Transverse colon (tissue), 4 donors: ENCODE measurements at regions of chr1 and their contacts with region 1.

Region 1: GRCh38 chr1:51372561-51372960 is 42.2 kb upstream of the TTC39A start:
- DNase-seq: no peak
- H3K4me3 ChIP-seq: no peak overlapping the region
- H3K27ac ChIP-seq: no peak overlapping the region
- H3K4me1 ChIP-seq: no peaks in the 10 kb centered on the region
- H3K27me3 ChIP-seq: no peaks in the 10 kb centered on the region
- CTCF ChIP-seq: no peak
- EP300 ChIP-seq: no peak
- POLR2A ChIP-seq: no peak

Region 2: GRCh38 chr1:51044834-51045233 is 327.7 kb before region 1 on chr1:
- in situ Hi-C with region 1: no loop called
- intact Hi-C with region 1: no loop called
- DNase-seq: no peak
- H3K4me3 ChIP-seq: no peak overlapping the region
- H3K27ac ChIP-seq: no peak overlapping the region
- H3K4me1 ChIP-seq: no peaks in the 10 kb centered on the region
- H3K27me3 ChIP-seq: no peaks in the 10 kb centered on the region
- CTCF ChIP-seq: peak in 3 of 5 experiments; percentile 20 to 38 (median 20)
- EP300 ChIP-seq: no peak
- POLR2A ChIP-seq: no peak

Region 3: DNA sequence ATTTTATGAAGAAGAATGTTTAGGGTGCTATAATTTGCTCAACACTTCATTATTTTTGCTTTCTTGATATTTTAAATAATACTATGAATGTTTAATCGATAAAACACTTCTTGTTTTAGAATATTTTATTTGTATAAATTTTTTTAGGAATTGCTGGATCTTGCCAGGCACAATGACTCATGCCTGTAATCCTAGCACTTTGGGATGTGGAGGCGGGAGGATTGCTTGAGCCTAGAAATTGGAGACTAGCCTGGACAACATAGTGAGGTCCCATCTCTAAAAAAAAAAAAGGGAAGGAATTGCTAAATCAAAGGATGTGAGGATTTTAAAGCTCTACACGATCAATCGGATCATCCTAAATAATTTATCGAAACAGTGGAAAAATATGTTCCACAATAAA is 118.9 kb before region 1 on chr1:
- in situ Hi-C with region 1: no loop called
- intact Hi-C with region 1: no loop called
- DNase-seq: no peak
- H3K4me3 ChIP-seq: no peak overlapping the region
- H3K27ac ChIP-seq: no peak overlapping the region
- H3K4me1 ChIP-seq: peaks cover 0 to 36% (median 1%) of the 10 kb centered on the region in 4 donors
- H3K27me3 ChIP-seq: no peaks in the 10 kb centered on the region
- CTCF ChIP-seq: no peak
- EP300 ChIP-seq: no peak
- POLR2A ChIP-seq: no peak

Region 4: GRCh38 chr1:51445351-51446090 is 73.0 kb after region 1 on chr1:
- in situ Hi-C with region 1: no loop called
- intact Hi-C with region 1: no loop called
- DNase-seq: no peak
- H3K4me3 ChIP-seq: no peak overlapping the region
- H3K27ac ChIP-seq: no peak overlapping the region
- H3K4me1 ChIP-seq: peaks cover 0 to 3% (median 1%) of the 10 kb centered on the region in 4 donors
- H3K27me3 ChIP-seq: no peaks in the 10 kb centered on the region
- CTCF ChIP-seq: no peak
- EP300 ChIP-seq: no peak
- POLR2A ChIP-seq: no peak

Region 5: GRCh38 chr1:51535006-51535592 is 162.5 kb after region 1 on chr1:
- in situ Hi-C with region 1: loop called in 1 of 4 experiments (anchors 25 kb)
- intact Hi-C with region 1: no loop called
- DNase-seq: peak; percentile 61
- H3K4me3 ChIP-seq: no peak overlapping the region
- H3K27ac ChIP-seq: no peak overlapping the region
- H3K4me1 ChIP-seq: peaks cover 0 to 9% (median 4%) of the 10 kb centered on the region in 4 donors
- H3K27me3 ChIP-seq: no peaks in the 10 kb centered on the region
- CTCF ChIP-seq: peak; percentile 56 to 65 (median 62)
- EP300 ChIP-seq: no peak
- POLR2A ChIP-seq: no peak